AG04450 (cell line): ENCODE measurements at regions of chr5 and their contacts with region 1.

Region 1: GRCh38 chr5:8842971-8843551 is 702.8 kb downstream of the SEMA5A start:
- DNase-seq: no peak
- H3K4me3 ChIP-seq: no peak overlapping the region
- H3K27ac ChIP-seq: no peak overlapping the region
- H3K27me3 ChIP-seq: no peaks in the 10 kb centered on the region
- CTCF ChIP-seq: peak; percentile 66

Region 2: DNA sequence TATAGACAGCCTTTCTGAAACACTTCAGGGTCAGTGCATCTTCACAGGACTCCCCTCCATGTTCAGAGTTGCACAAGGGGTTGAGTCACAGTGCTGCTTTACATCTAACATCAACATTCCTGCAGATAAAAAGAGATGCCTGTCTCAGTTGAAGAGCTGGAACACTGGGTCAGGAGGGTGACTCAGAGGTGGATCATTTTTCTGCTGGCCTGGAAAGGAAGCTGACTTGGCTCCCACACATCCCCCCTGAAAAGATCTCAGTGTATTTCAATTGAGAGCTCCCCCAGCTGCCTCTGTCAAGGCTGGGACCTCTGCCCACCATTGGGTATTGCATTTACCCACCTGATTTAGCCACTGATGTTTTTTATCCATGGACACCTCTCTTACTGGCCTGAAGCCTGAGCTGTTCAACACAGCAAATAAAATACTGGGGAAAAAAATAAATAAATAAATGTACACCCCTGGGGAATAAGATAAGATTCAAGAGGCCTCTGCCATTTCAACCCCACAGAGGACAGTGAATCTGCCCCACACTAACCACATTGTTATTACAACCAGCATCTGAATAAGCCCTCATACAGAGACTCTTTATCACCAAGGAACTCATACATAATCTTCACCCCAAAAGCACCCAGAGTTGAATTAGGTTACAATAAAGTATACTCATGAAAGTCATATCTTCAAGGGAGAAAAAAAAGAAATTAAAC is 13.6 kb before region 1 on chr5:
- CTCF ChIA-PET with region 1: interaction called, 26 read pairs
- POLR2A ChIA-PET with region 1: interaction called, 8 read pairs
- DNase-seq: peak; percentile 98
- H3K4me3 ChIP-seq: no peak overlapping the region
- H3K27ac ChIP-seq: peak overlapping the region; percentile 92
- H3K27me3 ChIP-seq: no peaks in the 10 kb centered on the region
- CTCF ChIP-seq: no peak